CD8-positive, alpha-beta memory T cell (primary cell): ENCODE measurements at regions of chr4 and their contacts with region 1.

Region 1: DNA sequence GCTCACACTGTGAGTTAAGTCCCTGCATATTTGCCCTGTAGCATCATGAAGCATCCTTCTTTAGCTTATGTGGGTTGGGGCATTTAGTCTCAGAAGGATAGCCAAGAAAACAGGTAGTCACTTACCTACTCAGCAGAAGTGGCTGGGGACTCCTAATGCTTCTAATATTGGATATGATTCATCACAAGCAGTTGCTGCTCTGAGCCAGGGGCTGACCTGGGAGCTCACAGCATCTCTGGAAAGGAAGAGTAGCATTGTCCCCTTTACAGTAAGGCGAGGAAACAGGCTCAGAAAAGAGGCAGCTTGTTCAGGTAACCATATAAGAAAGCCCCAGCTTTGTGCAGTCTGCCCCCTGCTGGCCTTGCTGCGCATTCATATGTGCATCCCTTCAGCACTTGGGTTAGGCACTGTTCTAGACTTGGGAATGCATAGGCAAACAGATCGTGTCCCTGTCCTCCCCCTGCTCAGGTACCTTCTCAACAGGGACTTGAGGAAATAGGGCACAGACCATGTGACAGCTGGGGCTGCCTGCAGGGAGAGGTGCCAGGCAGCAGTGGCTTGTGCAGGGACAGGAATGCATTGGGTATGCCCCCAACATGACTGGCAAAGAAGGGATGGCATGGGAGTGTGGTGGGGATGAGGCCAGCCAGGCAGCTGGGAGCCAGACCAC is 35.7 kb upstream of the TBC1D14 start:
- DNase-seq: peak; percentile 64 to 85 (median 70)
- H3K4me3 ChIP-seq: no peak overlapping the region
- H3K4me3 Mint-ChIP-seq: no peak overlapping the region
- H3K27ac ChIP-seq: no peak overlapping the region
- H3K27ac Mint-ChIP-seq: peak overlapping the region in 4 of 8 donors; percentile 26 to 70 (median 58)
- H3K4me1 ChIP-seq: no peaks in the 10 kb centered on the region
- H3K4me1 Mint-ChIP-seq: peaks cover 0 to 6% (median 5%) of the 10 kb centered on the region in 3 donors
- H3K27me3 ChIP-seq: no peaks in the 10 kb centered on the region
- H3K27me3 Mint-ChIP-seq: peaks cover 0 to 2% of the 10 kb centered on the region in 2 donors

Region 2: DNA sequence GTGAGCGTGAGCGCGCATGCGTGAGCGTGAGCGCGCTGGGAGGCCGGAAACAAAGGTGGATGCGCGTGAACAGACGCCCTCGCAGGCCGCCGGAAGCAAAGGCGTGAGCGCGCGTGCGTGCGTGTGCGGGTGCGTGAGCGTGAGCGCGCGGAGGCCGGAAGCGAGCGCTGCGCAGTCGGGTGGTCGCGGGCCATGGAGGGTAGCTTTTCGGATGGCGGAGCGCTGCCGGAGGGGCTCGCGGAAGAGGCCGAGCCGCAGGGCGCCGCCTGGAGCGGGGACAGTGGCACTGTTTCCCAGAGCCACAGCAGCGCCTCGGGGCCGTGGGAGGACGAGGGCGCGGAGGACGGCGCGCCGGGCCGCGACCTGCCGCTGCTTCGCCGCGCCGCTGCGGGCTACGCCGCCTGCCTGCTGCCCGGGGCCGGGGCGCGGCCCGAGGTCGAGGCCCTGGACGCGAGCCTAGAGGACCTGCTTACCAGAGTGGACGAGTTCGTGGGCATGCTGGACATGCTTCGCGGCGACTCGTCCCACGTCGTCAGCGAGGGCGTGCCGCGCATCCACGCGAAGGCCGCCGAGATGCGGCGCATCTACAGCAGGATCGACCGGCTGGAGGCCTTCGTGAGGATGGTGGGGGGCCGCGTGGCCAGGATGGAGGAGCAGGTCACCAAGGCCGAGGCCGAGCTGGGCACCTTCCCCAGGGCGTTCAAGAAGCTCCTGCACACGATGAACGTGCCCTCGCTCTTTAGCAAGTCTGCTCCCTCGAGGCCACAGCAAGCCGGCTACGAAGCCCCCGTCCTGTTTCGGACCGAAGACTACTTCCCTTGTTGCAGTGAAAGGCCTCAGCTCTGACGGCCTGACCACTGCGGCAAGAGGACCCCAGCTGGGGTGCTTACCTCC is 157.7 kb before region 1 on chr4 and contains the start of gene BLOC1S4:
- CTCF ChIA-PET with region 1: interaction called, 174 read pairs
- POLR2A ChIA-PET with region 1: interaction called, 12 read pairs
- DNase-seq: peak; percentile 83 to 94 (median 92)
- H3K4me3 ChIP-seq: peak within 1 kb of the TSS; percentile 78
- H3K4me3 Mint-ChIP-seq: peak within 1 kb of the TSS; percentile 93 to 97 (median 96)
- H3K27ac ChIP-seq: peak within 1 kb of the TSS; percentile 80
- H3K27ac Mint-ChIP-seq: peak within 1 kb of the TSS; percentile 92 to 98 (median 96)
- H3K4me1 ChIP-seq: peaks cover 34% of the 10 kb centered on the region
- H3K4me1 Mint-ChIP-seq: peaks cover 29 to 48% (median 48%) of the 10 kb centered on the region in 3 donors
- H3K27me3 ChIP-seq: no peaks in the 10 kb centered on the region
- H3K27me3 Mint-ChIP-seq: no peaks in the 10 kb centered on the region
- total RNA-seq, gene BLOC1S4: 21.5 to 22.9 TPM

Region 3: GRCh38 chr4:6783053-6783981 is 90.6 kb before region 1 on chr4:
- CTCF ChIA-PET with region 1: interaction called, 10 read pairs
- POLR2A ChIA-PET with region 1: interaction called, 4 read pairs
- DNase-seq: peak; percentile 83 to 91 (median 85)
- H3K4me3 ChIP-seq: peak overlapping the region; percentile 75
- H3K4me3 Mint-ChIP-seq: peak overlapping the region; percentile 83 to 95 (median 87)
- H3K27ac ChIP-seq: peak overlapping the region; percentile 85
- H3K27ac Mint-ChIP-seq: peak overlapping the region; percentile 87 to 97 (median 92)
- H3K4me1 ChIP-seq: peaks cover 44% of the 10 kb centered on the region
- H3K4me1 Mint-ChIP-seq: peaks cover 60 to 69% (median 68%) of the 10 kb centered on the region in 3 donors
- H3K27me3 ChIP-seq: no peaks in the 10 kb centered on the region
- H3K27me3 Mint-ChIP-seq: no peaks in the 10 kb centered on the region

Region 4: GRCh38 chr4:6885951-6886557 is 12.1 kb after region 1 on chr4:
- CTCF ChIA-PET with region 1: interaction called, 33 read pairs
- POLR2A ChIA-PET with region 1: no interaction called
- DNase-seq: no peak
- H3K4me3 ChIP-seq: no peak overlapping the region
- H3K4me3 Mint-ChIP-seq: no peak overlapping the region
- H3K27ac ChIP-seq: no peak overlapping the region
- H3K27ac Mint-ChIP-seq: peak overlapping the region in 4 of 8 donors; percentile 23 to 95 (median 43)
- H3K4me1 ChIP-seq: no peaks in the 10 kb centered on the region
- H3K4me1 Mint-ChIP-seq: peaks cover 7 to 21% (median 12%) of the 10 kb centered on the region in 3 donors
- H3K27me3 ChIP-seq: no peaks in the 10 kb centered on the region
- H3K27me3 Mint-ChIP-seq: no peaks in the 10 kb centered on the region

Region 5: DNA sequence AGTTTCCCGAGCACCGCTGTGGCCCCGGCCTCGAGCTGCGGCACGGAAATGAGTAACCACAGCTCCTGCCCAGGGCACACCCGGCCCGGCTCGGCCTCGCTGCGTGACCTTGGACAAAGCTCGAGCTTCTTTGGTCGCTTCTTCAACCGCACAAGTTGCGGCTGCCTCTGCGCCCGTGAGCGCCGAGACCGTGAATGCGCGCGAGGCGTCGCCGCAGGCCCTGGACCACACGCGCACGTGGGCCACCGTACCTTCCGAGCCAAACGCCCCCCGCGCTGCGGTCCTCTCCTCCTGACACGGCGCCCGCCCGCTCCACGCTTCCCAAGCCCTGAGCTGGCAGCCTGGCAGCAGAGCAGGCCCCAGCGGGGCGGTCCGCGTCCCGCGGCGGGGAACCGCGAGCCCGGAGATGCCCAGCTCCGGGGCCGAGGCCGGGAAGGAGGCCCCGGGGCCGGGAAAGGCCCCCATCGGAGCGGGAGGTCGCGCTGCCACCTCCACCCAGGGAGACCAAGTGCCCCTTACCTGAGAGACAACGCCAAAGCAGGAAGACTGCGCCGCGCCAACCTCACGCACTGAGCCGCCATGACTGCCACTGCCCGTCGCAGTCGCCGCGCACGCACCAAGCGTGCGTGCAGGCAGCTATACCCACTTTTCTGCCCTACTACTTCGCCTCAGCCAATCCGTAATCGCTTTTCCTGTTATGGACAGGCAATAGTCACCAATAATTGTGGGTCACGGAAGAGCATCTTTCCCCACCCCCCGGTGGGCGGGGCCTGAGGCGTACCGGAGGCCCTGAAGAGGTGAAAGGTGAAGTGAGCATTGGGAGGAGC is 193.7 kb after region 1 on chr4 and contains the start of gene GRPEL1:
- CTCF ChIA-PET with region 1: interaction called, 21 read pairs
- POLR2A ChIA-PET with region 1: no interaction called
- DNase-seq: peak; percentile 100
- H3K4me3 ChIP-seq: peak within 1 kb of the TSS; percentile 82
- H3K4me3 Mint-ChIP-seq: peak within 1 kb of the TSS; percentile 91 to 96 (median 94)
- H3K27ac ChIP-seq: peak within 1 kb of the TSS; percentile 87
- H3K27ac Mint-ChIP-seq: peak within 1 kb of the TSS; percentile 75 to 99 (median 94)
- H3K4me1 ChIP-seq: peaks cover 34% of the 10 kb centered on the region
- H3K4me1 Mint-ChIP-seq: peaks cover 39 to 63% (median 57%) of the 10 kb centered on the region in 3 donors
- H3K27me3 ChIP-seq: no peaks in the 10 kb centered on the region
- H3K27me3 Mint-ChIP-seq: peaks cover 0 to 7% of the 10 kb centered on the region in 2 donors
- total RNA-seq, gene GRPEL1: 94.0 to 94.5 TPM